Tibial artery (tissue), 4 donors: ENCODE measurements at regions of chr3 and their contacts with region 1.

Region 1: GRCh38 chr3:44173263-44173662 is 68.4 kb upstream of the TOPAZ1 start:
- DNase-seq: no peak
- H3K4me3 ChIP-seq: no peak overlapping the region
- H3K27ac ChIP-seq: no peak overlapping the region
- H3K4me1 ChIP-seq: no peaks in the 10 kb centered on the region
- H3K27me3 ChIP-seq: peaks cover 0 to 3% of the 10 kb centered on the region in 2 donors
- CTCF ChIP-seq: no peak

Region 2: GRCh38 chr3:44021651-44022594 is 151.3 kb before region 1 on chr3:
- intact Hi-C with region 1: loop called (anchors 1 kb)
- DNase-seq: no peak
- H3K4me3 ChIP-seq: peak overlapping the region in 1 of 2 donors; percentile 31
- H3K27ac ChIP-seq: no peak overlapping the region
- H3K4me1 ChIP-seq: peaks cover 0 to 10% (median 7%) of the 10 kb centered on the region in 4 donors
- H3K27me3 ChIP-seq: peaks cover 0 to 46% of the 10 kb centered on the region in 2 donors
- CTCF ChIP-seq: no peak

Region 3: DNA sequence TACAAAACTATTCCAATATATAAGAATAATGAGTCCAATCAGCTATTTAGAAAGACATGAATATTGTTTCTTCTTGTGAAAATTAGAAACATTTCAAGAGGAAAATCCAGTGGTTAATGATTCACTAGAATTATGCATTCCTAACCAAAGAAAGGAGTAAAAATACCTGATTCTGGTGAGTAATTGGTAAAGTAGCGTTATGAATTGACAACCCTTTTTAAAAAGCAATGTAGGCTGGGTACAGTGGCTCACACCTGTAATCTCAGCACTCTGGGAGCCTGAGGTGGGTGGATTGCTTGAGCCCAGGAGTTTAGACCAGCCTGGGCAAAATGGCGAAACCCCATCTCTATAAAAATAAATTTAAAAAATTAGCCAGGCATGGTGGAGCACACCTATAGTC is 111.7 kb after region 1 on chr3:
- intact Hi-C with region 1: no loop called
- DNase-seq: no peak
- H3K4me3 ChIP-seq: no peak overlapping the region
- H3K27ac ChIP-seq: no peak overlapping the region
- H3K4me1 ChIP-seq: no peaks in the 10 kb centered on the region
- H3K27me3 ChIP-seq: no peaks in the 10 kb centered on the region
- CTCF ChIP-seq: no peak